ENCODE measurements at regions of chr1 and their contacts with region 1.

Region 1: DNA sequence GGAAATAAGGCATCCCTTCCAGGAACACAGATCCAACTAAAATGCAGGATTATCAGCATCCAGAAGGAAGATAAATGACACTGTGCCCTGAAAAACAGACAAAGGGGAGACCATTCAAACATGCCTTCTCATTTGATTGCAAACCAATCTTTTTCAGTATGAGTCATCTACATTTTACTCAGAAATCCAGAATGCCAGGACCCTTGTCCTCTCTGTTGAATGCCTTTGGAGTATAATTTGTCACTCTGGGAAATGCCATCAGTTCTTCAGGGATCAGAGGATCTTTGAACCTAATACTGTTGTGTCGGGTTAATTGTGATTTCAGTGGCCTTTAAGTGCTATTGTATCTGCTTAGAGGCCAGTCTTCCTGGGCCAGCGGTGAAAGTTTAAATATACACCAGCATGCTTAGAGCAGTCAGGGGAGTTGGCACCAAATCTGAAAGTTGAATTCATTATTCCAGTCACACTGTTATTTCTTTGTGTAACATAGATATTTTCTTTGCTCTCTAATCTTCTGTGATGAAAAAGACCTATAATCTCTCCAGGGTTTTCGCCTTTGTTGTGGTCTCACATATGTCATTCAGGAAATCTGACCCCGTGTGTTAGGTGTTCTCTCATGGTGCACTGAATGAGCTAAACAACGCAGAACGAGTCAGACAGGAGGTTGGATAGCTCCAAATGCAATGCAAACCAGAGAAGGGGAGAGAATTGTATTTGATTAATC is 364.8 kb upstream of the SGIP1 start:
- DNase-seq: peak in 1 of 42 donors; percentile 38

Region 2: GRCh38 chr1:66000033-66000637 is 169.0 kb before region 1 on chr1:
- intact Hi-C with region 1: loop called (anchors 10 kb)
- DNase-seq: no peak

Region 3: DNA sequence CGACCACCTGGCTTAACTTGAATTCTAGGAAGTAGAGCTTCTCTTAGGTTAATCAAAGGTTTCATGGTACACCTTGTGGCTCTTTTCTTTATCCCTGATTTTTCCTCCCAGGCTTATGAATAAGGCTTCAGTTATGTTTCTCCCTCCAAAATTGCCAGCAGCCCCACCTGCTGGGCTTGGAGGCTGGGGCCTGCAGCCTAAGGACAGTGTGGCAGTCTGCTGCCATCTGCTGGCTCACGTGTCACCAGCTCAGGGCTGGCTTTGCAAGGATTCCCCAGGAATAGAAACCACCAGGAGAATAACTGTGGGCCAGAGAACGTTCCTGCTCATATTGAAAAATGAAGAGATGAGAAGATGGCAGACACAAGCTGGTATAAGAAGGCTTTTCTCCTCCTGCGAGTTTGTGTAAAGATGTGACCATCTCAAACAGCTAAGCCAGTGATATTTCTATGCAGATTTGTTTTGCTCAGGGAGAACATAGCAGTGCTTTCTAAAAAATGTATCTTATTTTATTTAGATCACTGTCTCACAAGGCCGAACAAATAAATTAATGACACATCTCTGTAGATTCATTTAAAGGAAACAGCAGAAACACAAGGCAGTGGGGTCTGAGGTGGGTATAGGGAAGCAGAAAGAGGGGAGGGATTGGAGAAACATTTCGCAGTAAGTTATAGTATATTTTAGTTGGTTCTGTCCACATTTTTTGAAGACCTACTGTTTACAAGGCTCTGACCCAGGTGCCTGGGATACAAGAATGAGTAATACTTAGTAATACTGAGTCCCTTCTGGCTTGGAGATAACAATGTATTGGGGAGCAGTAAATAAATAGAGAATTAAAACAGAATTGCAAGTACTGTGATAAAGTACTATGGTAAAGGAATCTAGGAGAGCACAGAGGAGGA is 73.8 kb after region 1 on chr1:
- intact Hi-C with region 1: loop called (anchors 5 kb)
- DNase-seq: peak; percentile 83 to 97 (median 92)

Region 4: GRCh38 chr1:66383168-66383567 is 214.1 kb after region 1 on chr1:
- intact Hi-C with region 1: no loop called
- DNase-seq: no peak